ENCODE measurements at regions of chr5 and their contacts with region 1.

Region 1: DNA sequence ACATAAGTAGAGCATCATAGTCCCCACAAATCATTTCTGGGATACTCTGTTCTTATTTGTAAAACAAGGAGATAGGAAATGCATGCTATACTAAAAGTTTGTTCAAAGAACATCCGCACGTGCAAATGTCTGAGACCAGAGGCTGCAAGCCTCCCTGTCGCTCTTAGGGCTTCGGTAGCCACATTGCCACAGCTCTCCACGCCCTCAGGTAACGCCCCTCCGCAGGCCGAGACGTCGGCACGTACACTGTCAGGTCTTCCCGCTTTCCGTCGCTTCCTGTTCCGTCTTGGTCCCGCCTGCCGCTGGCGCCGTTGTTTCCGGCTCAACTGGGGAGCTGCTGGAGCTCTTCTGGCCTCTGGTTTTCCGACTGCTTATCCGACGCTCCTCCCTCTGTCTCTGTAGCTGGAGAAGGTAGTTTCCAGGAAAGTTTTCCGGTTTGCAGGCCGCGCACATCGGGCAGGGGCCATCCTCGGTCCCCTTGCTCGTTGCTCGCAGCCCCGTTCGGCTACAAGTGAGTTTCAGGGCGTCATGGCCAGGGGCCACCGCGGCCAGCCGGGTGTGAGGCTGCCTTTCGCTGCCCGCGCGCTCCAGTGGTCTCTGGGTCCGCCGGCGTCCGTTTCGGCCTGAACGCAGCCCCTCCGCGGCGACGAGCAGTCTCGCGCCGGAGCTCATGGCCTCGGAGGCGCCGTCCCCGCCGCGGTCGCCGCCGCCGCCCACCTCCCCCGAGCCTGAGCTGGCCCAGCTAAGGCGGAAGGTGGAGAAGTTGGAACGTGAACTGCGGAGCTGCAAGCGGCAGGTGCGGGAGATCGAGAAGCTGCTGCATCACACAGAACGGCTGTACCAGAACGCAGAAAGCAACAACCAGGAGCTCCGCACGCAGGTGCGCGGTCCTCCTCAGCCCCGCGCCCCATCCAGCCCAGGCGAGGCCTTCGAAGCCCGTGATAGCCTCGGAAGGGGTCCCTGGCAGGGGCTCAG is at the start of gene AGGF1:
- DNase-seq: peak; percentile 70 to 94 (median 88)
- ATAC-seq: peak; percentile 97 to 98
- H3K4me3 Mint-ChIP-seq: peak within 1 kb of the TSS; percentile 87 to 98 (median 94)
- H3K27ac Mint-ChIP-seq: peak within 1 kb of the TSS; percentile 80 to 97 (median 95)
- H3K4me1 Mint-ChIP-seq: peaks cover 3 to 47% (median 44%) of the 10 kb centered on the region in 4 donors
- H3K27me3 Mint-ChIP-seq: peaks cover 0 to 4% (median 0%) of the 10 kb centered on the region in 5 donors
- polyA plus RNA-seq, gene AGGF1: 24.4 to 35.9 (median 28.9) TPM

Region 2: DNA sequence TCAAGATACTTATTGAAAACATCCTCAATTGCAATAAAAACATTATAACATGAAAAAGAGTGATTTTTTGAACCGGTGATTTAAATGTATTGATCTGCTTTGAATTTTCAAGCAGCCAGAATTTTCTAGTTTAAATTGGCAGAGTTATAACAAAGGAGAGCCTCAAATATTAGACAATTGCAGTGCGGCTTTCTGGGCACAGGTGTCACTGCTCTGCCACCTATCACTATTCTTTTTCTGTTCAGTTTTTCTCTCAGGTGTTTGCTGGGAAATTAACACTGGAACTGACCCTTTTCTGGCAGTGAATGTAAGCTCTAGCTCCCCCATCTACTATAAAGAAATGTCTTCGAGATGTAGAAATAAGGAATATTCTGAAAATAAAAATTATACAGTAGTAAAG is 33.7 kb after region 1 on chr5:
- POLR2A ChIA-PET with region 1: no interaction called
- DNase-seq: peak in 1 of 10 donors; percentile 7
- ATAC-seq: no peak
- H3K4me3 Mint-ChIP-seq: no peak overlapping the region
- H3K27ac Mint-ChIP-seq: no peak overlapping the region
- H3K4me1 Mint-ChIP-seq: peaks cover 6 to 13% (median 9%) of the 10 kb centered on the region in 4 donors
- H3K27me3 Mint-ChIP-seq: no peaks in the 10 kb centered on the region

Region 3: DNA sequence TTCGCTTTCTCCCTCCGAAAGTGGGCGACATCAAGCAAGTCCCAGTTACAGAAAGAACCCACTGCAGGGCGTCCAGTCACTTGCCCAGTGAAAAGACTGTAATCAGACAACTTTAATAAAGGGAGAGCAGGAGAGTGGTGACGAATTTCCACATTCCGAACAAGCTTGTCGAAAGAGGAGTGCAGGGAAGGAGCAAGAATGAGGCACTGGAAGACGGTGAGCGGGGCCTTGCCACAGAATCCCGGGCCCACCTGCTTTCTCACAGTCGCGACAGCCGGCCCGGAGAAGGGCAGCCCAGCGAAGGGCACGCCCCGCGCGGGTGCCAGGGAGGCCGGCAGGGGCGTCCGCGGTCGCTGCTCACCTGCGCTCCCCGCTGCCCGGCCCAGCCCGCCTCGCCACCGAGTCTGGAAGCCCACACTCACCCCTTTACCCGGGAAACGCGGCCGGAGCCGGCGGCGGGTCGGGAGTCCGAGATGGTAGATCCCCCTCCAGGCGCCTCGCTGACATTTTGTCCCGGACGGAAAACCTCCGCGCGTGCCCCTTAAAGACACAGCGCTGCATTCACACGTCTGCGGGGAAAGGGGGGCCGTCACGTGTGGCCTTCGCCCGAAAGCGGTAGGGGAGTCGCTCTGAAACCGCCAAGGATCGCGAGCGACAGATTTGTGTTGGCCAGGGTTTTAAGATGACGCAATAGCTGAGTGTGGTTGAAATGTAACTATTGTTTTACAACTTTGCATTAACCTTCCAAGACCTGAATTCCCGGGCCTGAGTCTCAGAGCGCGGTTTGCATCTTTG is 56.5 kb after region 1 on chr5 and contains the start of gene ZBED3:
- POLR2A ChIA-PET with region 1: interaction called, 17 read pairs
- DNase-seq: peak; percentile 39 to 78 (median 72)
- ATAC-seq: peak; percentile 85 to 90
- H3K4me3 Mint-ChIP-seq: peak within 1 kb of the TSS; percentile 85 to 98 (median 96)
- H3K27ac Mint-ChIP-seq: peak within 1 kb of the TSS; percentile 79 to 97 (median 95)
- H3K4me1 Mint-ChIP-seq: peaks cover 10 to 32% (median 21%) of the 10 kb centered on the region in 4 donors
- H3K27me3 Mint-ChIP-seq: peaks cover 0 to 5% (median 0%) of the 10 kb centered on the region in 5 donors
- polyA plus RNA-seq, gene ZBED3: 2.6 to 8.9 (median 4.6) TPM

Region 4: DNA sequence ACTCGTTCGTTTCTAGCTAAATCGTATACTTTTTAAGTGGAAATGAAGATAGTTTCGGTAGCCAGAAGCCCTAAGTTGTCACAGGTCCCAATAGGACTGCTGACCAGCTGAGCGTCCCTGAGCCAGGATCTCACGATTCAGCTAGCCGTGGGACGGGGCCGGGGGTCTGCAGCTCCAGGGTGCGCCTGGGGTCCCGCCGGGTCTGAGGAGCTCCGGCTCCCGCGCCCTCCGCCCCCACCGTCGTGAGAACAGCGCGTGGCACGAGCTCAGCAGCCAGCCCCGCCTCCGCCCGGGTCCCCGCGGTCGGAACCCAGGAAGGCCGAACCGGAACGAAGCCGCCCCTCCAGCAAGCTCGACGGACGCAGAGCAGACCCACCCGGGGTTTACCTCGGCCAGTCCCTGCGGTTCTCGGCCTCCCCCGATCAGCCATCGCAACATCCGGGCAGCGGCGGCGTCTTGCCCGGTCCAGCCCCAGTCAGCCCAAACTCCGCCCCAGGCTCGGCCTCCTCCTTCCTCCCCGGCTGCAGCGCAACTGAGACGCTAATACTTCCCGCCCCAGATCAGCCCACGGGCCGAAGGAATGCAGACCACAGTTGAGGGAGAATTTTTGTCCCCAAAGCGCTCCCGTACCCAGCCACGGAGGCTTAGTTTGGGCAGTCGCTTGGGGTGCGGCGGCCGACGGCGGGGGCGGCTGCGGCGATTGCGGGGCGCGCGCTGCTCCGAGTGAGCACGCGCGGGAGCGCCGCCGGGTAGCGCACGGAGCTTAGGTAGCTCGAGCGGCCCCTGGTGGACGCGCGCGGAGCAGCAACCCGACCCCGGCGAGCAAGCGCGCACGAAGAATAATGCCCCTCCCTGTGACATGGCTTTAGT is 461.6 kb after region 1 on chr5 and contains the start of gene WDR41:
- POLR2A ChIA-PET with region 1: interaction called, 13 read pairs
- DNase-seq: peak; percentile 69 to 88 (median 84)
- ATAC-seq: peak; percentile 88 to 89
- H3K4me3 Mint-ChIP-seq: peak within 1 kb of the TSS; percentile 82 to 96 (median 92)
- H3K27ac Mint-ChIP-seq: peak within 1 kb of the TSS; percentile 64 to 96 (median 91)
- H3K4me1 Mint-ChIP-seq: peaks cover 3 to 22% (median 12%) of the 10 kb centered on the region in 4 donors
- H3K27me3 Mint-ChIP-seq: peaks cover 7 to 26% (median 9%) of the 10 kb centered on the region in 5 donors
- polyA plus RNA-seq, gene WDR41: 13.5 to 19.4 (median 14.9) TPM